ENCODE measurements at regions of chr19 and their contacts with region 1.

Region 1: DNA sequence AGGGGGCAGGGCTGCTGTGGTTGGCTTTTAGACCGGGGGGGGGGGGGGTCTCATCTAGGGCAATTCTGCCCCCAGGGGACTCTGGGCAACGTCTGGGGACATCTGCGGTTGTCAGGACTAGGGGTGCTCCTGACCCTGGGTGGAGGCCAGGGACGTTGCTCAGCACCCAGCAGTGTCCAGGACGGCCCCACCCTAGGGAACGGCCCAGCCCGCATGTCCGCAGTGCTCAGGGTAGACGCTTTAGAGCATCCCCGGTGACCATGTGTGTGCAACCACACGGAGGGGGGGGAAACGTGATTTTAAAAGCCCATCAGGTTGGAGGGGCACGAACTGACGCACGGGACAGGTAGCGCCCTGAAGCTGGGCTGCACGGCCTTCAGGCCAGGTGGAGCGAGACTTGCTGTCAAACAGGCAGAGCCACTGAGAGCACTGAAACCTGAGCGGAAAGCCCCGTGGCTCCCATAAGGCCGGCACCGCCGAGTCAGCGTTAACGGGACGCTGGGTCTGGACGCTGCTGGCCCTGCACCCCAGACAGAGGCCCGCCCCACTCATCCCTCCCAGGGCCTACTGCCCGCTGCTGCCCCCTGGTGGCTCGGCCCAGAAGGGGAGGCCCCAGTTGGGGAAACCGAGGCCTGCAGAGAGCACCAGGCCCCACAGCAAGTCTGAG is 8.3 kb downstream of the CACTIN start:
- DNase-seq: peak; percentile 90
- H3K4me3 ChIP-seq: peak overlapping the region in 3 of 8 donors; percentile 21 to 60 (median 32)
- H3K27ac ChIP-seq: peak overlapping the region in 5 of 8 donors; percentile 53 to 69 (median 61)
- H3K4me1 ChIP-seq: peaks cover 0 to 33% (median 22%) of the 10 kb centered on the region in 6 donors
- H3K27me3 ChIP-seq: no peaks in the 10 kb centered on the region
- CTCF ChIP-seq: peak; percentile 80 to 97 (median 92)
- POLR2A ChIP-seq: no peak

Region 2: GRCh38 chr19:3450796-3451411 is 167.4 kb before region 1 on chr19:
- intact Hi-C with region 1: no loop called
- DNase-seq: no peak
- H3K4me3 ChIP-seq: no peak overlapping the region
- H3K27ac ChIP-seq: peak overlapping the region in 7 of 8 donors; percentile 19 to 66 (median 43)
- H3K4me1 ChIP-seq: peaks cover 0 to 13% (median 3%) of the 10 kb centered on the region in 6 donors
- H3K27me3 ChIP-seq: no peaks in the 10 kb centered on the region
- CTCF ChIP-seq: no peak
- POLR2A ChIP-seq: no peak

Region 3: DNA sequence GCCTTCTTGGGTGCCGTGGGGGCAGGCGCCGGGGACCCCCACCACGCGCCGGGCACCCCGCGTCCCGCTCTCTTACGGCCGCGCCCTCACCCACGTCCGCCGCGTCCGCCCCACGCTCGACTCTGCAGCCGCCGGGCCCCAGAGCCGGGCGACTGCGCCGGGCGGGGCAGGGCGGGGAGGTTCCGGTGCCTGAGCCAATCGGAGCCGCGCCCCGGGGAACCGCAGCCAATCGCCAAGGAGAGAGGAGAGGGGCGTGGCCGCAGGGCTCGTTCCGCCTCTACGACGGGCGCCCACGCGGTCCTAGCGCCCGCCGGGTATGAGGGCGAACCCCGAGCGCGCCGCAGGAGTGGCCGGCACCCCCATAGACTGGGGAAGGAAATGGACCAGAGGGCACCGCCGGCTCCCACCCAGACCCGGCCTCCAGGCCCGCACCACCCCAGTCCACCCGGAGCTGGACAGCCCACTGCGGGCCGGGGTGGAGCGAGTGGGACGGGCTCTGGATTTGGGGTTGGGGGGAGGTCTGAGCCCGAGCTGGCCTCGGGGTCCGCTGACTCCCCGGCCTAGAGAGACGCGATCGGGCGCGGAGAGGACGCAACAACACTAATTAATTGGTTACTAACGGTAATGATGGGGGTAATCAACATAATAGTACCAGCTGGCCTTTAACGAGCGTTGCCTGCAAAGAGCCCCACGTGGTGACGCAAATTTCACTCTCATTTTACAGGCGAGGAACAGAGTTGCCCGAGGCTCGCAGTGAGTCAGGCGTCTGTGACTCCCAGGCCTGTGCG is 60.6 kb before region 1 on chr19 and contains the start of gene MFSD12:
- intact Hi-C with region 1: loop called (anchors 10 kb)
- DNase-seq: peak; percentile 97
- H3K4me3 ChIP-seq: peak within 1 kb of the TSS; percentile 81 to 99 (median 92)
- H3K27ac ChIP-seq: peak within 1 kb of the TSS; percentile 72 to 90 (median 85)
- H3K4me1 ChIP-seq: peaks cover 38 to 77% (median 60%) of the 10 kb centered on the region in 6 donors
- H3K27me3 ChIP-seq: no peaks in the 10 kb centered on the region
- CTCF ChIP-seq: peak in 2 of 11 experiments; percentile 20 to 41
- POLR2A ChIP-seq: peak in 1 of 3 donors; percentile 90
- total RNA-seq, gene MFSD12: 62.8 to 131 (median 98.6) TPM

Region 4: GRCh38 chr19:3580156-3580934 is 37.9 kb before region 1 on chr19:
- intact Hi-C with region 1: loop called (anchors 5 kb)
- DNase-seq: no peak
- H3K4me3 ChIP-seq: no peak overlapping the region
- H3K27ac ChIP-seq: peak overlapping the region in 2 of 8 donors; percentile 26 to 38
- H3K4me1 ChIP-seq: peaks cover 0 to 20% (median 14%) of the 10 kb centered on the region in 6 donors
- H3K27me3 ChIP-seq: peaks cover 0 to 12% (median 4%) of the 10 kb centered on the region in 7 donors
- CTCF ChIP-seq: no peak
- POLR2A ChIP-seq: no peak

Region 5: GRCh38 chr19:3721131-3721886 is 103.0 kb after region 1 on chr19:
- intact Hi-C with region 1: no loop called
- DNase-seq: peak; percentile 94
- H3K4me3 ChIP-seq: peak overlapping the region; percentile 8 to 72 (median 30)
- H3K27ac ChIP-seq: no peak overlapping the region
- H3K4me1 ChIP-seq: peaks cover 4 to 33% (median 23%) of the 10 kb centered on the region in 6 donors
- H3K27me3 ChIP-seq: peaks cover 0 to 78% (median 45%) of the 10 kb centered on the region in 7 donors
- CTCF ChIP-seq: peak in 1 of 11 experiments; percentile 11
- POLR2A ChIP-seq: peak in 1 of 3 donors; percentile 48